ENCODE measurements at regions of chr7 and their contacts with region 1.

Region 1: DNA sequence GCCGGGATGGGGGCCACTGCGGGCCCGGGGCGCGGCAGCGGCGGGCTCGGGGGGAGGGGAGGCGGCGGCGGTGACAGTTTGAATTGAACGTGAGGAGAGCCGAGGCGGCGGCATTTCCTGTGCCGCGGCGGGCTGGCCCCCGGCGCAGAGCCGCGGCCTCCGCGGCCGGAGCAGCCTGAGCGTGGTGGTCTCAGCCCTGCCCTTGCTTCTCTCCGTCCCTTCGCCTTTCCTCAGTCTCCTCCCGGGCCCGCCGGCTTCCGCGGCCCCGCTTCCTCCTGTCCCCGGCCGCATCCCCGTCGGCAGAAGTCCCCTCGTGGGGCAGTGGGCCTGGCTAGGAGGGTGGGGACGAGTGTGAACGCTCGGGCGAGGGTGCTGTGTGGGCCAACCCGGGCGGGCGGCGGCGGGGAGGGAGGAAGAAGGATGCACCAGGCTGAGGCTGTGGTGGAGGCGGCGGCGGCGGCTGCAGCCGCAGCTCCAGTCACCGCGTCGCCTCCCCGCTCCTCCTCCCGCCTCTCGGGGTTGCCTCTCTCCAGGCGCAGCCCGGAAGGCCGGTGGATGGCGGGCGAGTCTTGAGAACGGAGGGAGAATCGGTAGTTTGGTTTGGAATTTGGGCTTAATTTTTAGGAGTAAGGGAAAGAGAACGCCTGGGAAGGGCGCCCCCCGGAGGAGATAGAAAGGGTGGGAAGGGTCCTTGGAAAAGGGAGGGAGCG is 690 bp downstream of the SEPTIN7 start:
- DNase-seq: peak; percentile 60 to 94 (median 76)
- ATAC-seq: peak; percentile 52
- H3K4me3 ChIP-seq: peak overlapping the region; percentile 77 to 93
- H3K27ac ChIP-seq: peak overlapping the region; percentile 98 to 99
- H3K4me1 ChIP-seq: peaks cover 17 to 53% of the 10 kb centered on the region in 2 donors
- H3K27me3 ChIP-seq: no peaks in the 10 kb centered on the region
- CTCF ChIP-seq: peak; percentile 31 to 54

Region 2: GRCh38 chr7:35701287-35701900 is 100.2 kb before region 1 on chr7:
- intact Hi-C with region 1: loop called in 1 of 2 experiments (anchors 10 kb)
- DNase-seq: no peak
- ATAC-seq: no peak
- H3K4me3 ChIP-seq: no peak overlapping the region
- H3K27ac ChIP-seq: no peak overlapping the region
- H3K4me1 ChIP-seq: peaks cover 0 to 14% of the 10 kb centered on the region in 2 donors
- H3K27me3 ChIP-seq: no peaks in the 10 kb centered on the region
- CTCF ChIP-seq: no peak

Measured in left lung (tissue), 14 donors.